Right cardiac atrium (tissue), 5 donors: ENCODE measurements at regions of chr10 and their contacts with region 1.

Region 1: DNA sequence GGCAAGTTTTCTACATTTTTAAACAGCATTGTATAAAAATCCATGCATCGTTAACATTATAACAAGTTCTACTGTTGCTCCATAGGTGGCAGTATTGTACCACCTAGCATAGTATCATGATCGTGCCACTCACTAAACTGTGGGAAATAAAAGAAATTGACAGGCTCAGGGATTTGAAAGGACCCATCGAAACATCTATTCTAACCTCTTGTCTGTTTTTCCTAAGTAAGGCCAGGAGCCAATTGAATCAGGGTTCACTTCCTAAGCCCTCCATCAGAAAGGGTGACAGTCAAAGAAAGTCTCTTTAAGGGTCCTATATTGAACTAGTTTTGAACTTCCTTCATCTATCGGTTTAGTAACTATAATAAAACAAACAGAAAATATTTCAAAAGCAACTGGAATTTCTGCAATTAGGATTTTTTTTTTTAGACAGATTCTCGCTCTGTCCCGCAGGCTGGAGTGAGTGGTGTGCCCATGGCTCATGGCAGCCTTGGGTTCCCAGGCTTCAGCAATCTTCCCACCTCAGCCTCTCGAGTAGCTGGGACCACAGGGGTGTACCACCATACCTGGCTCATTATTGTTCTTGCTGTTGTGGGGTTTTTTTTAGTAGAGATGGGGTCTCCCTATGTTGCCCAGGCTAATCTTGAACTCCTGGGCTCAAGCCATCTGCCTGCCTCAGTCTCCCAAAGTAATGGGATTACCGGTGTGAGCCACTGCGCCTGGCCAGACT is 9.4 kb downstream of the HACD1 start:
- DNase-seq: no peak
- ATAC-seq: peak; percentile 72 to 80
- H3K4me3 ChIP-seq: no peak overlapping the region
- H3K27ac ChIP-seq: no peak overlapping the region
- H3K4me1 ChIP-seq: no peaks in the 10 kb centered on the region
- H3K27me3 ChIP-seq: no peaks in the 10 kb centered on the region

Region 2: GRCh38 chr10:17075533-17076359 is 532.0 kb before region 1 on chr10:
- intact Hi-C with region 1: no loop called
- DNase-seq: no peak
- ATAC-seq: peak; percentile 81 to 85
- H3K4me3 ChIP-seq: no peak overlapping the region
- H3K27ac ChIP-seq: no peak overlapping the region
- H3K4me1 ChIP-seq: no peaks in the 10 kb centered on the region
- H3K27me3 ChIP-seq: no peaks in the 10 kb centered on the region

Region 3: DNA sequence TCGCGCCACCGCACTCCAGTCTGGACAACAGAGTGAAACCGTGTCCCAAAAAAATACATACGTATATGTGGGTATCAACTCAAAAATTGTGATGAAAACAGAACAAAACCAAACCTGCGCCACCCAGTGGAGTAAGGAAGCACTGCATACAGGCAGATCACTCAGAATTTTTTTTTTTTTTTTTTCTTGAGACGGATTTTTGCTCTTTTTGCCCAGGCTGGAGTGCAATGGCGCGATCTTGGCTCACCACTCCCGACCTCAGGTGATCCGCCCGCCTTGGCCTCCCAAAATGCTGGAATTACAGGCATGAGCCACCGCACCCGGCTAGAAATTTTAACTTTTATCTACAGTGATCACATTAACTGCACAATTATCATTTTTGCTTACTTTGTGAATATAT is 135.2 kb after region 1 on chr10:
- intact Hi-C with region 1: loop called (anchors 5 to 10 kb)
- DNase-seq: peak; percentile 59 to 85 (median 80)
- ATAC-seq: no peak
- H3K4me3 ChIP-seq: no peak overlapping the region
- H3K27ac ChIP-seq: no peak overlapping the region
- H3K4me1 ChIP-seq: no peaks in the 10 kb centered on the region
- H3K27me3 ChIP-seq: no peaks in the 10 kb centered on the region

Region 4: DNA sequence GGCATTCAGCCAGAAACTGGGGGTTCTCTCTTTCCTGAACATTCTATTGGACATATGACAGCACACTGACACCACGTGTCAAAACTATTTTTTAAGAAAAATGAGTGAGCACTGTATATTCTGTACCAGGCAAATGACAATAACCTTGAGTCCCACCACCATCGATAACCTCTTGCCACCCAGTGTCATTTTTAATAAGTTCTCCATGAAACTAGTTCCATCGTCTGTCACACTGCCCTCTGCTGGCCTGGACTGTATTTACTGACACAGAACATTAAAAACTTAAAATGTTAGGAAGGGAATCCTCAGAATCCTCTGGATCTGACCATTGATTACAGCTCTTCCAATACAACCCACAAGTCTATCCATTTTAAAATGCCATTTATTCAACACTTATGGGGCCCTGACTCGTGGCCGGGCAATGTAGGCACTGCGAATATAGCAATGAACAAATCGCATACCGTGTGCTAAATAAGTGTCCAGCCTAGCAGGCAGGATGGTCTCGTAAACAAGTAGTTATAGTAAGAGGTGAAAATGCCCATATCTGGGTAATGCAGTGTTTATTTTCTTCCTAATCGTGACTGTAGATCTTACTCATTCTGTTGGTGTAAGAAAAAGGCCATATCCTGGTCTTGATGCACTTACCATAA is 496.6 kb after region 1 on chr10:
- intact Hi-C with region 1: loop called in 1 of 4 experiments (anchors 5 kb)
- DNase-seq: peak; percentile 51 to 84 (median 63)
- ATAC-seq: no peak
- H3K4me3 ChIP-seq: no peak overlapping the region
- H3K27ac ChIP-seq: no peak overlapping the region
- H3K4me1 ChIP-seq: peaks cover 2% of the 10 kb centered on the region
- H3K27me3 ChIP-seq: no peaks in the 10 kb centered on the region